ENCODE measurements at regions of chr7 and their contacts with region 1.

Region 1: DNA sequence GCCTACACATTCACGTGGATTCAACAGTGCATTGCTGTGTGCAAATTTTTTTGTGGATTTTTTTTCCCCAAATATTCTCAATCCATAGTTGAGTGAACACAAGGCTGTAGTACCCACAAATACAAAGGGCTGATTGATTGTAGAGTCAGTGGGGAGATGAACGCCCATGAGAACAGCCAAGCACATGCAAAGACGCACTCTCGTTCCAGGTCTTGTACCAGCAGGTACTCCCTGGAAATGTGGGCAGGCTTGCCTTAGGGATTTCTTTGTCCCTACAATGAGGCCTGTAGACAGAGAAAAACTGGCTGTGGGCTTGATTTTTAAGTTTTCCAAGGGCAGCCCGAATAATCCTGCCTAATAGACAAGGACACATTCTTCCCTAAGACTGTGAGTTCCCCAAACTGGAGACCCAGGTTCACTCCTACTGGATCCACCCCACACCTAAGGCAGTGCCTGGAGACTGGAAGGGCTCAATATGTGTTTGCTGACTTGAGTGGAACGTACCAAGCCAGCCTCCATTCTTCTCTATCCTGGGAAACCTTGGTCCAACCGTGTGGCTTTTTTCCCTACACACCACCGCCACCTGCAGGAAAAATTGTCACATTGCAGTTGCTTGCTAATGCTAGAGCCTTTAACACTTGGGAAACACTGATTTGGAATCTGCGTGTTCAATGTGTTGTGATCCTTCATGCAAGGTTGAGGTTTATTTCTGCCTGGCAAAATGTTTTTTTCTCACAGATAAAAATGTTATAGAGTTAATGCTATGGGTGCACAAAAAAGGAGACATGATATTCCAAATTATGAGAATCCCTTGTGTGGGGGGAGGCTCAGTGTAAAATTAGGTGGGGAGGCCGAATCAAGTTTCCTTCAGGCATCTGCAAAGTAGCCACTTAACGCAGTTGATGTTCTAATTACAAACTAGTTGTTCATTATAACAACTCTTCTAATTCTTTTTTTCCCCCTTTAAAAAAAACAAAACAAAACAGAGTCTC is 49.3 kb downstream of the PPP1R17 start:
- DNase-seq: peak in 1 of 2 donors; percentile 43
- H3K4me3 ChIP-seq: no peak overlapping the region
- H3K27ac ChIP-seq: no peak overlapping the region
- H3K4me1 ChIP-seq: no peaks in the 10 kb centered on the region
- H3K27me3 ChIP-seq: no peaks in the 10 kb centered on the region
- CTCF ChIP-seq: peak; percentile 73 to 75

Region 2: DNA sequence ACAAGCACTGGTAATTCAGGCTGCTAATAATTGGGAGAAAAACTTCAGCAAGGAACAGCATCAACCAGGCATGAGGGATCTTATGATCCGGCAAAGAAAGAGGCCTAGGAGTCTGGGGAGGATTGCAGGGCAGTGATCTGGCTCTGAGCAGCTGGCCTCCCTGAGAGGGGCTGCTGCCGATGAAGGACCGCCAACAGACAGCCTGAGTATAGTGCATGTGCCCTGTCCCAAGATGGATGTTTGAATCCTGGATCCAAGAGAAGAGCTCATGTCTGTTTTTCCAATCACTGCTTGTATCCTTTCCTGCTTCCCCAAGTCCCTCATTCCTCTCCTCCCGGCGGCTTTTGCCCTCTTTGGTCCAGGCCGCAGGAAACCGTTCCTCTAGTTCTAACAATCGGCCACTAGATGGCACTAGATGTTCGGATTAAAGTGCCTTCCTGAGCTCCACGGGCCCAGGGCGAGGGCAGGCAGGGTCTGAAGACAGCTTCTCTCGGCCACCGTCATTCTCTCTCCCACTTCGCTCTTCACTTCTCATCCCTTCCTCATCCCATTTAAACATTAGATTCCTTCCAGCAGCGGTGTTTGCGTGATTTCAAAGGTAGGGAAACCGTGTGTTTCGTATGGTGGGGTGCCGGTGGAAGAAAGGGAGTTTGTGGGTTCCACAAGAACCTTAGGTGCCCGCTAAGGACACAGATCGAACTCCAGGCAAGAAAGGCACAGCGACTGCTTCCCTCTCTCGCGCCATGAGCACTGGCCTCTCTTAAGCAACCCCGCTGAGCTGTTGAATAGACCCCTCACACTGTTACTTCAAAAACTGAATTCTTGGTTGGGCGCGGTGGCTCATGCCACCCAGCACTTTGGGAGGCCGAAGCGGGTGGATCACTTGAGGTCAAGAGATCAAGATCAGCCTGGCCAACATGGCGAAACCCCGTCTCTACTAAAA is 601.8 kb before region 1 on chr7:
- intact Hi-C with region 1: loop called (anchors 10 kb)
- DNase-seq: peak in 1 of 2 donors; percentile 60
- H3K4me3 ChIP-seq: no peak overlapping the region
- H3K27ac ChIP-seq: no peak overlapping the region
- H3K4me1 ChIP-seq: no peaks in the 10 kb centered on the region
- H3K27me3 ChIP-seq: no peaks in the 10 kb centered on the region
- CTCF ChIP-seq: peak; percentile 53 to 68